Ovary (tissue), 10 donors: ENCODE measurements at regions of chr1 and their contacts with region 1.

Region 1: DNA sequence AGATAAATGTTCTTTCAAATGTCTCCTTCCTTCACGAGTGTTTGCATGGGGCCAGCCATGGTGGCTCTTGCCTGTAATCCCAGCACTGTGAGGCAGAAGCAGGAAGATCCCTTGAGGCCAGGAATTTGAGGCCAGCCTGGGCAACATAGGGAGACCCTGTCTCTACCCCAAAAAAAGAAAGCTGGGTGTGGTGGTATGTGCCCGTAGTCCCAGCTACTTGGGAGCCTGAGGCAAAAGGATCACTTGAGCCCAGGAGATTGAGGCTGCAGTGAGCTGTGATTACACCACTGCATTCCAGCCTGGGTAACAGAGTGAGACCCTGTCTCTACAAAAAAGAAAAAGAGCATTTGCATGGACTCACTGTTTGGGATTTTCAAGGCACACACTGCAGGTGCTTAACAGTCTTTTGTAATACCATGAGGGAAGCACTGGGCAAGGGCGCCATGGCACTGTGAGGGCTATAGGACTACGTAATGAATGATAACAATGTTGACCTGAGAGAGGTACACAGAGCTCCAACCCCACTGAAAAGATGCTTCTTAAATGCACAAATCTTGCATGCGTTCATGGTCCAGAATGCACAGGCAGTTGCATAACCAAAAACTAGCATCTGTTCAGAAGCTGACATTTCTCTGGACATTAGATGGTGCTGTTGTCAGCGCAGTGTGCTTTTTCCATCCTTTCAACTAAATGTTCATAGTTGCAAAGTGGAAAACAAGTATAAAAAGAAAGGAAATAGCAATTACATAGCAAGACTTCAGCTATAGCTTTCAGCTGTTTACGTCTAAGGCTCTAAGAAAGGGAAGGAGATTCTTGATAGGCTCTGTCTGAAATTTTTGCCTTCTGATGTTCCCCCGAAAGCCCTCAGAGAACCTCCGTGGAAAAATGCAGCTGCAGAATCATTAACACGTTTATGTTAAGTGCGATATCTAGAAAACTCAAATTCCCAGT is 7.8 kb upstream of the TARBP1 start:
- DNase-seq: peak in 2 of 5 donors; percentile 26 to 58
- H3K4me3 ChIP-seq: no peak overlapping the region
- H3K27ac ChIP-seq: no peak overlapping the region
- H3K4me1 ChIP-seq: no peaks in the 10 kb centered on the region
- H3K27me3 ChIP-seq: no peaks in the 10 kb centered on the region
- CTCF ChIP-seq: peak in 2 of 3 donors; percentile 74 to 79
- EP300 ChIP-seq: no peak
- POLR2A ChIP-seq: no peak

Region 2: DNA sequence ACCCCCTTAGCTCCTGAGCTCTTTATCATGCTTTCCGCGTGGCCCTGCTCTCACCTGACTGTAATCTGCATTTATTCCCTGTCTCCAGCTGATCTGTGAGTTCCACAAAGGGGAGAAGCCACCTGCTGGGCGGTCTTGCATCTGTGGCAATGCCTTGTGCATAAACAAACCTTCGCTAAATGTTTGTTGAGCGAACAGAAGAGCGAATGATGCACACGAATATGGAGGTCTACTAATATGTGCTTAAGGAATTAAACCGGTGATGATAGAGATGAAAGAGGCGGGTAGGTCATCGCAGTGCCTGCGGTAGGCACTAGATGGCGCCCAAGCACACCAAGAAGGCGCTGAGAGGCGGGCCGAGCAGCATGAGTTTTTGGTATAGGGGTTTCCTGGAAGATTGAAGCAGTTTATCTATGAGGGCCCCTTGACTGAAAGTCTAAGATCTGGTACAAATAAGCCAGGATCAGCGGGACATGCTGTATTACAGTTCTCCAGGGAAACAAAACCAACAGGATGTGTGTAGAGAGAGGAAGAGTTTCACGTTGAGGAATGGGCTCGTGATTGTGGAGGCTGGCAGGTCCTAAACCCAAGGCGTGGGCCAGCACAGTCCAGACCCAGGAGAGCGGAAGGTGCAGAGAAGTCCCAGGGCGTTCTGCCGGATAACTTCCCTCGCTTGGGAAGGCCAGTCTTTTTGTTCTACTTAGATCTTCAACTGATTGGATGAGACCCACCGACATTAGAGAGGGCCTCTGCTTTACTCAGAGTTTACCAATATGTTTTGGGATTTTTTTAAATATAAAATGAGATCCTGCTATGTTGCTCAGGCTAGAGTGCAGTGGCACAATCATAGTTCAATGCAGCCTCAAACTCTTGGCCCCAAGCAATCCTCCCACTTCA is 607.2 kb after region 1 on chr1:
- intact Hi-C with region 1: loop called in 2 of 4 experiments (anchors 5 kb)
- DNase-seq: peak; percentile 66 to 86 (median 79)
- H3K4me3 ChIP-seq: no peak overlapping the region
- H3K27ac ChIP-seq: no peak overlapping the region
- H3K4me1 ChIP-seq: peaks cover 3% of the 10 kb centered on the region
- H3K27me3 ChIP-seq: no peaks in the 10 kb centered on the region
- CTCF ChIP-seq: peak; percentile 72 to 80 (median 72)
- EP300 ChIP-seq: no peak
- POLR2A ChIP-seq: no peak